B cell (primary cell): ENCODE measurements at regions of chr1 and their contacts with region 1.

Region 1: GRCh38 chr1:212284744-212285684 is at the start of gene PPP2R5A:
- DNase-seq: peak; percentile 100
- ATAC-seq: peak; percentile 85
- H3K4me3 ChIP-seq: peak within 1 kb of the TSS; percentile 75 to 97 (median 92)
- H3K4me3 Mint-ChIP-seq: peak within 1 kb of the TSS; percentile 93
- H3K27ac ChIP-seq: peak within 1 kb of the TSS; percentile 89 to 90
- H3K27ac Mint-ChIP-seq: peak within 1 kb of the TSS; percentile 96
- H3K4me1 ChIP-seq: peaks cover 22 to 28% of the 10 kb centered on the region in 2 donors
- H3K4me1 Mint-ChIP-seq: peaks cover 41% of the 10 kb centered on the region
- H3K27me3 ChIP-seq: no peaks in the 10 kb centered on the region
- H3K27me3 Mint-ChIP-seq: no peaks in the 10 kb centered on the region
- CTCF ChIP-seq: peak; percentile 62
- total RNA-seq, gene PPP2R5A: 41.1 and 43.4 TPM in 2 replicates

Region 2: GRCh38 chr1:211680752-211681327 is 604.2 kb before region 1 on chr1:
- CTCF ChIA-PET with region 1: interaction called, 14 read pairs
- POLR2A ChIA-PET with region 1: interaction called, 3 read pairs
- intact Hi-C with region 1: loop called (anchors 1 kb)
- DNase-seq: peak; percentile 89
- ATAC-seq: peak; percentile 90
- H3K4me3 ChIP-seq: no peak overlapping the region
- H3K4me3 Mint-ChIP-seq: peak overlapping the region; percentile 44
- H3K27ac ChIP-seq: peak overlapping the region; percentile 70 to 81
- H3K27ac Mint-ChIP-seq: peak overlapping the region; percentile 87
- H3K4me1 ChIP-seq: peaks cover 24 to 35% of the 10 kb centered on the region in 2 donors
- H3K4me1 Mint-ChIP-seq: peaks cover 52% of the 10 kb centered on the region
- H3K27me3 ChIP-seq: no peaks in the 10 kb centered on the region
- H3K27me3 Mint-ChIP-seq: no peaks in the 10 kb centered on the region
- CTCF ChIP-seq: peak; percentile 86

Region 3: GRCh38 chr1:212062832-212063438 is 222.1 kb before region 1 on chr1:
- CTCF ChIA-PET with region 1: interaction called, 91 read pairs
- POLR2A ChIA-PET with region 1: no interaction called
- intact Hi-C with region 1: no loop called
- DNase-seq: peak; percentile 56
- ATAC-seq: no peak
- H3K4me3 ChIP-seq: no peak overlapping the region
- H3K4me3 Mint-ChIP-seq: no peak overlapping the region
- H3K27ac ChIP-seq: no peak overlapping the region
- H3K27ac Mint-ChIP-seq: no peak overlapping the region
- H3K4me1 ChIP-seq: no peaks in the 10 kb centered on the region
- H3K4me1 Mint-ChIP-seq: no peaks in the 10 kb centered on the region
- H3K27me3 ChIP-seq: no peaks in the 10 kb centered on the region
- H3K27me3 Mint-ChIP-seq: no peaks in the 10 kb centered on the region
- CTCF ChIP-seq: peak; percentile 95

Region 4: GRCh38 chr1:212414328-212415106 is 129.5 kb after region 1 on chr1 and contains the start of gene PACC1:
- CTCF ChIA-PET with region 1: no interaction called
- POLR2A ChIA-PET with region 1: interaction called, 4 read pairs
- intact Hi-C with region 1: loop called (anchors 1 kb)
- DNase-seq: peak; percentile 98
- ATAC-seq: peak; percentile 98
- H3K4me3 ChIP-seq: peak within 1 kb of the TSS; percentile 64 to 93 (median 83)
- H3K4me3 Mint-ChIP-seq: peak within 1 kb of the TSS; percentile 99
- H3K27ac ChIP-seq: peak within 1 kb of the TSS; percentile 83 to 84
- H3K27ac Mint-ChIP-seq: peak within 1 kb of the TSS; percentile 86
- H3K4me1 ChIP-seq: peaks cover 24 to 35% of the 10 kb centered on the region in 2 donors
- H3K4me1 Mint-ChIP-seq: peaks cover 39% of the 10 kb centered on the region
- H3K27me3 ChIP-seq: no peaks in the 10 kb centered on the region
- H3K27me3 Mint-ChIP-seq: no peaks in the 10 kb centered on the region
- CTCF ChIP-seq: no peak
- total RNA-seq, gene PACC1: 16.7 and 18.3 TPM in 2 replicates

Region 5: GRCh38 chr1:212791676-212792395 is 506.8 kb after region 1 on chr1 and contains the starts of genes NSL1 and TATDN3:
- CTCF ChIA-PET with region 1: no interaction called
- POLR2A ChIA-PET with region 1: no interaction called
- intact Hi-C with region 1: loop called (anchors 1 kb)
- DNase-seq: peak; percentile 97
- ATAC-seq: peak; percentile 72
- H3K4me3 ChIP-seq: peak within 1 kb of the TSS; percentile 77 to 93 (median 83)
- H3K4me3 Mint-ChIP-seq: peak within 1 kb of the TSS; percentile 93
- H3K27ac ChIP-seq: peak within 1 kb of the TSS; percentile 91 to 92
- H3K27ac Mint-ChIP-seq: peak within 1 kb of the TSS; percentile 93
- H3K4me1 ChIP-seq: peaks cover 39 to 61% of the 10 kb centered on the region in 2 donors
- H3K4me1 Mint-ChIP-seq: peaks cover 46% of the 10 kb centered on the region
- H3K27me3 ChIP-seq: no peaks in the 10 kb centered on the region
- H3K27me3 Mint-ChIP-seq: no peaks in the 10 kb centered on the region
- CTCF ChIP-seq: no peak
- total RNA-seq, gene NSL1: 45.9 and 50.6 TPM in 2 replicates
- total RNA-seq, gene TATDN3: 28.6 and 30.7 TPM in 2 replicates